ENCODE measurements at regions of chr2 and their contacts with region 1.

Region 1: GRCh38 chr2:180125245-180125962 is 118.3 kb upstream of the CWC22 start:
- DNase-seq: peak; percentile 51
- H3K4me3 Mint-ChIP-seq: no peak overlapping the region
- H3K27ac Mint-ChIP-seq: no peak overlapping the region
- H3K4me1 Mint-ChIP-seq: peaks cover 23% of the 10 kb centered on the region
- H3K27me3 Mint-ChIP-seq: no peaks in the 10 kb centered on the region
- CTCF ChIP-seq: peak; percentile 68

Region 2: DNA sequence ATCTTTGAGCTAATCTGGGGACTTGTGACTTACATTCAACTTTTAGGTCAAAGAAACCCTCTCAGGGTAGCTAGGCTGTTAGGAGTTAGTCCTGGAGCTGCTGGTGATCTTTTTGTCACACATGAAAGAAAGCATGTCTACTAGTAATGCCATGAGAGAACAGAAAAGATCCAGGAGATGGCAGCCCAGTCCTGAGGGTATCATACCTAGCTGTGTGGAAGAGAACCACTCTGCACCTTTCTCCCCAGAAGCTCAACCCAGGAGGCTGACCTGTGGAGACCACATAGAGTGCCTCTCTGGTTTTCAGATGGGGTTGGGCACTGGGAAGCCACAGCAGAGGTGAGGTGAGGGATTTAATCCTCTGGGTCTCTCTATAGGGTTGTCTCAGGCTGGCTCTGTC is 394.8 kb after region 1 on chr2:
- CTCF ChIA-PET with region 1: interaction called, 8 read pairs
- intact Hi-C with region 1: loop called (anchors 1 kb)
- DNase-seq: peak; percentile 32
- H3K4me3 Mint-ChIP-seq: no peak overlapping the region
- H3K27ac Mint-ChIP-seq: no peak overlapping the region
- H3K4me1 Mint-ChIP-seq: peaks cover 93% of the 10 kb centered on the region
- H3K27me3 Mint-ChIP-seq: no peaks in the 10 kb centered on the region
- CTCF ChIP-seq: no peak

Region 3: GRCh38 chr2:180753809-180754761 is 628.7 kb after region 1 on chr2:
- CTCF ChIA-PET with region 1: no interaction called
- intact Hi-C with region 1: loop called (anchors 10 kb)
- DNase-seq: peak; percentile 32
- H3K4me3 Mint-ChIP-seq: no peak overlapping the region
- H3K27ac Mint-ChIP-seq: no peak overlapping the region
- H3K4me1 Mint-ChIP-seq: no peaks in the 10 kb centered on the region
- H3K27me3 Mint-ChIP-seq: no peaks in the 10 kb centered on the region
- CTCF ChIP-seq: no peak

Region 4: GRCh38 chr2:181058378-181059269 is 933.2 kb after region 1 on chr2:
- CTCF ChIA-PET with region 1: interaction called, 11 read pairs
- intact Hi-C with region 1: loop called (anchors 1 kb)
- DNase-seq: peak; percentile 41
- H3K4me3 Mint-ChIP-seq: no peak overlapping the region
- H3K27ac Mint-ChIP-seq: no peak overlapping the region
- H3K4me1 Mint-ChIP-seq: peaks cover 10% of the 10 kb centered on the region
- H3K27me3 Mint-ChIP-seq: no peaks in the 10 kb centered on the region
- CTCF ChIP-seq: peak; percentile 80

Region 5: GRCh38 chr2:181466661-181467576 is 1341.5 kb after region 1 on chr2:
- CTCF ChIA-PET with region 1: interaction called, 3 read pairs
- intact Hi-C with region 1: loop called (anchors 2 kb)
- DNase-seq: peak; percentile 70
- H3K4me3 Mint-ChIP-seq: no peak overlapping the region
- H3K27ac Mint-ChIP-seq: no peak overlapping the region
- H3K4me1 Mint-ChIP-seq: no peaks in the 10 kb centered on the region
- H3K27me3 Mint-ChIP-seq: no peaks in the 10 kb centered on the region
- CTCF ChIP-seq: peak; percentile 89

Region 6: DNA sequence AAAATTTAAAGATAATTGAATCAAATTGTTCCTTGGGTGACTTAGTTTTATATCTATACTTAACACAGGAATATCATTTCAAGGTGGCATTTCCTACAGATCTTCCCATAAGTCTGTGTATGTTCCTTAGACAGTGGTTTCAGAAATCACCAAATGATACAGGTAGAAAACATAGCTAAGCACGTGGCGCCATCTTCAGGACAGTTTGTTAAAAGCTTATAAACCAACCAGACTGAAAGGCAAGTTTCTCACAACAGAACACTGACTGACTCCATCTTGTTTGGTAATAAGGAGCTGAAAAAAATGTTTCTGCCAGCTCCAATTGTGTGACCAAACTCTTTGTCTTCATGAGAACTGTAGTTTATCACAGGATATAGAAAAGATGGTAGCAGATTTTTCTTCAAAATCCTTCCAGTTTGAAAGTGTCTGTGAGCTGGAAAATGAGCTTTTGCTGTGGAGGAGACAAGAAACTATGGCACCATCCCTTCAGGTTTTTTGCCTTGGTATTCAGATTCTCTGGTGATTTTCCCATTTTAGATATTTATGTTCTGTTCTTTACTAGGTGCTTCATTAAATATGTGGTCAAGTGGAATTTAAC is 1589.7 kb after region 1 on chr2:
- CTCF ChIA-PET with region 1: interaction called, 5 read pairs
- intact Hi-C with region 1: loop called (anchors 10 kb)
- DNase-seq: peak; percentile 77
- H3K4me3 Mint-ChIP-seq: no peak overlapping the region
- H3K27ac Mint-ChIP-seq: no peak overlapping the region
- H3K4me1 Mint-ChIP-seq: no peaks in the 10 kb centered on the region
- H3K27me3 Mint-ChIP-seq: no peaks in the 10 kb centered on the region
- CTCF ChIP-seq: peak; percentile 42